Activated CD4-positive, alpha-beta T cell treated with anti-CD3 and anti-CD28 coated beads for 36 hours (primary cell): ENCODE measurements at regions of chr5 and their contacts with region 1.

Region 1: DNA sequence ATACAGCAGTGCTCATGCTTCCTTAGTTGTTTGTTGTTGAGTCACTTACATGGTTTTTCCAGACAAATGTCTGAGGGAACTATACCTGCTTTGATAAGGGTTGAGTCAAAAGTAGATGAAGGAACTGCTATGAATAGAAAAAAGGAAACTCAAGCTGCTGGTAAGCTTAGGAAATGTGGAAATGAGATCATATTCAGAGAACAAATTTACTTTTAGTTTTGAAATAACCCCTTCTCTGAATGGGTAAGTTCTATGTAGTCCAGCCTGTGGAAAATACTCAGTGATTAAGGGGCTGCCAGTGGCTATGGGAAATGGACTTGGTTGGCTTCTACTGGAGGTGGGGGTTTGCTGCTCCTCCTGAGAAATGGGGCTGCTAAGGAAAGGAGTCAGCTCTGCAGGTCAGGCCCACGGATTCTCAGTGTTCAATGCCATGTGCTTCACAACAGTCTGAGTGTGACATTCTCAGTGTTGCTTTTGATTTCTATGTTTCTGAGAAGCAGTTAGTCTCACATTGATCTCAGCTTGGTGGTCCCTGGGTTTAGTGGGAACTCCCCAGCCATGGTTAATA is 47.7 kb upstream of the GLRX start:
- DNase-seq: peak; percentile 70
- ATAC-seq: peak; percentile 78
- H3K4me3 Mint-ChIP-seq: peak overlapping the region; percentile 63
- H3K27ac Mint-ChIP-seq: peak overlapping the region; percentile 98
- H3K4me1 Mint-ChIP-seq: peaks cover 62% of the 10 kb centered on the region
- H3K27me3 Mint-ChIP-seq: no peaks in the 10 kb centered on the region

Region 2: DNA sequence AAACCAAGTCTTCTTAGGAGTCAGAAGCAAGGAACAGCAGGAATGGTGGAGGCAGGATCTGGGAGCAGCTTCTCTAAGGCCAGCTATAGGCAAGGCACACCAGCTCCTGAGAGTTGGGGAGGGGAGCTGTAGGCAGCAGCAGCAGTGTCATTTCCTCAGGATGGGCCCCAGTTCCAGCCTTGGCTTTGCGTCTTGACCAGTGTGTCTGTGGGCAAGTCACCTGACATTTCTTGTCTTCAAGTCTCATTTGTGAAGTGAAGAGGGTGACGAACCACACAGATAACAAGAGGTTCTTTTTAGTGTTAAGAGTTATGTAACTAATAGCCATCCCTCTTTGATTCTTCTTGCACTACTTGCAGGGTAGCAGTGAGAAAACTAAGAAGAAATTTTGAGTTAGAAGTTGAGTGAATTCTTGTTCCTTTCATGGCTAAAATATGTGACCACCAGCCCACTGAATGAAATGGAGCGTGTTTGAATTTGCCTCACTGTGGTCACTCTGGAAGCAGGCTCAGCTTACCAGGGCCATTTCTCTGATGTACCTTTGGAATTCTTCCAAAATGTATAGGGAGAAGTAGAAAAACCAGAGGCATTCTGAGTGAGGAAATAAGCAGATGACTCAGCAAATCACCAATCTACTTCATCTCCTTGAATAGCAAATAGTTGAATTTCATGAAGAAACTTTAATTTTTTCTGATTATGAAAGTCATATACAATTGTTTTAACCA is 96.7 kb before region 1 on chr5:
- CTCF ChIA-PET with region 1: no interaction called
- POLR2A ChIA-PET with region 1: no interaction called
- intact Hi-C with region 1: no loop called
- DNase-seq: no peak
- ATAC-seq: no peak
- H3K4me3 Mint-ChIP-seq: no peak overlapping the region
- H3K27ac Mint-ChIP-seq: no peak overlapping the region
- H3K4me1 Mint-ChIP-seq: no peaks in the 10 kb centered on the region
- H3K27me3 Mint-ChIP-seq: no peaks in the 10 kb centered on the region

Region 3: DNA sequence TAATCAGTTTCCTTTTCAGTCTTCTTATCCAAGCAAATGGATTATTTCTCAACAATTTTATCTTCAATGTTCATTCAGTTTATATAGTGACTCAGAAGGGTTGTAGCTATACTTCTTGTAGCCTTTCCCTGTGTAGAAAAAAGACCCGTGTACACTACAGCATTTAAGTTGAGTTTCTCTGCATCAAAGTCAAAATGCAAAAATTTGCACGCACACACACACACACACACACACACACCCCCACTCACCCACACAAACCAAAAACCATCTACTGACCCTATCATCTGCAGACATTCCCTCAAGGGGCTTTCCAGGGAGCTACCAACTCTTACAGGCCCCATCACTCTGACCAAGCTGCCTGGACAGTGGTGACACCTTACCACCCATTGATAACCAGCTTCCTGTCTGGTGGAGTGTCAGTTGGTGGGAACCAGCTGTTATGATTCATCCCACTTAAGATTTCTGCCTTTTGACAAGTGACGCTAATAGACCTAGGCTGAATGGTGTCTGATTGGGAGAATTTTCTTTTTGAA is 103.7 kb after region 1 on chr5:
- CTCF ChIA-PET with region 1: no interaction called
- POLR2A ChIA-PET with region 1: no interaction called
- intact Hi-C with region 1: no loop called
- DNase-seq: peak; percentile 14
- ATAC-seq: peak; percentile 77
- H3K4me3 Mint-ChIP-seq: no peak overlapping the region
- H3K27ac Mint-ChIP-seq: no peak overlapping the region
- H3K4me1 Mint-ChIP-seq: peaks cover 2% of the 10 kb centered on the region
- H3K27me3 Mint-ChIP-seq: peaks cover 2% of the 10 kb centered on the region

Region 4: DNA sequence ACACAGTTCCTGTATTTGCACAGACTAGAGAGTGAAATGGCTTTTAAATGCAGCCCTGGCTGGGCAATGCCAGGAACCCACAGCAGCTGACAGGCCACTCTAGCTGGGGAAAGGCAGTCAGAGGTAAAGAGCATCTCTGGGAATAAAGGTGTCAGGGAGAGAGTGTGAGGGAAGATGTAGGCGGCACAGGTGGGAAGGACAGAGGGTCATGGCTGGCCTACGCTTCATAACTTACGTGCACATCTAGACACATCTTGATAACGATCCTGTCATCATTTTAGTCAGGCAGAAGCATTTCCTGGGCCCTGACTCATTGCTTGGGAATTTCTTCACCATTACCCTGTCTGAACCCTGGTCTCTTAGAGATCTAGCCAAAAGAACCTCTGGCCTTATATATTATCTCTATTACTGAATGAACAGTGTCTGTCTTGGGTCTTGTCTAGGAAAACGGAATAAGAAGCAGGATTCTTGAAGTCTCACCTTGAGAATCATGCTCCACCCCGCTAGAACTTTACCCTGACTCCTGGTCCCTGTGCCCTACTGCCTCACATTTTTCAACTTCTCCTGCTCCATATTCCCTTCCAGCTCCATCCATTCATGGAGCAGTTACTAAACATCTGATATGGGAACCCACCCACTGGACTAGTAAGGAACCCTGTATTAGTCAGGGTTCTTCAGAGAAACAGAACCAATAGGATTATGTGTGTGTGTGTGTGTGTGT is 197.9 kb after region 1 on chr5:
- CTCF ChIA-PET with region 1: no interaction called
- POLR2A ChIA-PET with region 1: no interaction called
- intact Hi-C with region 1: loop called in 1 of 2 experiments (anchors 5 kb)
- DNase-seq: peak; percentile 36
- ATAC-seq: peak; percentile 62
- H3K4me3 Mint-ChIP-seq: no peak overlapping the region
- H3K27ac Mint-ChIP-seq: peak overlapping the region; percentile 87
- H3K4me1 Mint-ChIP-seq: peaks cover 52% of the 10 kb centered on the region
- H3K27me3 Mint-ChIP-seq: no peaks in the 10 kb centered on the region

Region 5: GRCh38 chr5:96220610-96221390 is 350.6 kb after region 1 on chr5:
- CTCF ChIA-PET with region 1: no interaction called
- POLR2A ChIA-PET with region 1: no interaction called
- intact Hi-C with region 1: loop called in 1 of 2 experiments (anchors 2 kb)
- DNase-seq: peak; percentile 43
- ATAC-seq: peak; percentile 89
- H3K4me3 Mint-ChIP-seq: no peak overlapping the region
- H3K27ac Mint-ChIP-seq: peak overlapping the region; percentile 77
- H3K4me1 Mint-ChIP-seq: peaks cover 19% of the 10 kb centered on the region
- H3K27me3 Mint-ChIP-seq: peaks cover 13% of the 10 kb centered on the region

Region 6: GRCh38 chr5:96336351-96336985 is 466.3 kb after region 1 on chr5:
- CTCF ChIA-PET with region 1: interaction called, 15 read pairs
- POLR2A ChIA-PET with region 1: no interaction called
- intact Hi-C with region 1: no loop called
- DNase-seq: peak; percentile 74
- ATAC-seq: peak; percentile 82
- H3K4me3 Mint-ChIP-seq: no peak overlapping the region
- H3K27ac Mint-ChIP-seq: no peak overlapping the region
- H3K4me1 Mint-ChIP-seq: peaks cover 9% of the 10 kb centered on the region
- H3K27me3 Mint-ChIP-seq: peaks cover 26% of the 10 kb centered on the region

Region 7: DNA sequence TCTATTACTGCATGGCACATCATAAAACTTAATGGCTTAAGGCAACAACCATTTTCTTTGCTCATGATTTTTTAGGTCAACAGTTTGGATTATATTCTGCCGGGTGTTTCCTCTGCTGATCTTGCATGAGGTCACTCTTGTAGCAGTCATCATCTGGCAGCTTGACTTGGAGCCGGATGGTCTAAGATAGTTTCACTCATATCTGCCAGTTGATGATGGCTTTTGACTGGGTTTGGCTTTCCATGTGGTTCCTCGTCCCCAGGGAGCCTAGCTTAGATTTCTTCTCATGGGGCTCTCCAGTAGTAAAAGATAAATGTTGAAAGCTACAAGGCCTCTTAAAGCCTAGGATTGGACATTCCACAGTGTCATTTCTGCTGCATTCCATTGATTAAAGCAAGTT is 1093.1 kb after region 1 on chr5:
- CTCF ChIA-PET with region 1: no interaction called
- POLR2A ChIA-PET with region 1: no interaction called
- intact Hi-C with region 1: loop called in 1 of 2 experiments (anchors 5 kb)
- DNase-seq: peak; percentile 46
- ATAC-seq: peak; percentile 76
- H3K4me3 Mint-ChIP-seq: peak overlapping the region; percentile 64
- H3K27ac Mint-ChIP-seq: peak overlapping the region; percentile 97
- H3K4me1 Mint-ChIP-seq: peaks cover 75% of the 10 kb centered on the region
- H3K27me3 Mint-ChIP-seq: no peaks in the 10 kb centered on the region